ENCODE measurements at regions of chr19 and their contacts with region 1.

Region 1: DNA sequence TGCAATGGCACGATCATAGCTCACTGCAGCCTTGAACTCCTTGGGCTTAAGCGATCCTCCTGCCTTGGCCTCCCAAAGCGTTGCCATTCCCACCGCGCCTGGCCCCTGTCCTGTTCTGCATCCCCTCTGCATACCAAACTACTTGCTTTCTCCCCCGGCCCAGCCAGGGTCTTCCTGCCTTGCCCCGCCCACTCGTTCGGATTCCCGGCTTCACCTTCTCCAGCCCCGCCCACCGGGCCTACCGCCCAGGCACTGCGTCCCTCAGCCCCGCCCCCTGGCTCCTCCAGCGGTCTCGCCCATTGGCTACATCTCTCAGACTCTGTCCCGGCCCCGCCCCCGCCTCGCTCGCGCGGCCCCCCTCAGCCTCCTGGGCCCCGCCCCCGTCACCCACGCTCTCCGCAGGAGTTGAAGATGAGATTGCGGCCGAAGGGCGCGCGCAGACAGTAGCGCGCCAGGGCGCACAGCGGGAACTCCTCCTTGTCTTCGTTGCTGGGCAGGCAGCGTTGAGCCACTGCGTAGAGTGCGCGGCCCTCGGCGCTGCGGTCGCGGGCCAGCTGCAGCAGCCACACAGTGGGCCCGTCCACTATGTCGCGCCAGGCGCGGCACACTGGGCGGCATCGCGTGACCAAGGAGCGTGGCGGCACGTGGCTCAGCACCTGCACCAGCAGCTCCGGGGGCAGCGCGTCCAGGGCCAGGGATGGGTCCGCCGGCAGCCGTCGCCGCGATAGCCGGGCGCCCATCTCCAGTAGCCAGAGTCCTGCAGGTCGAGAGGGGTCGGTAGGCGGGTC is 19.0 kb downstream of the MRPS12 start:
- DNase-seq: peak; percentile 60 to 90 (median 77)
- ATAC-seq: peak; percentile 94
- H3K4me3 ChIP-seq: peak overlapping the region; percentile 20
- H3K4me3 Mint-ChIP-seq: peak overlapping the region; percentile 72
- H3K27ac ChIP-seq: no peak overlapping the region
- H3K27ac Mint-ChIP-seq: no peak overlapping the region
- H3K4me1 ChIP-seq: peaks cover 18% of the 10 kb centered on the region
- H3K4me1 Mint-ChIP-seq: peaks cover 13% of the 10 kb centered on the region
- H3K27me3 ChIP-seq: peaks cover 6 to 8% of the 10 kb centered on the region in 2 experiments
- H3K27me3 Mint-ChIP-seq: peaks cover 17% of the 10 kb centered on the region
- CTCF ChIP-seq: no peak

Region 2: GRCh38 chr19:39014037-39014436 is 64.3 kb after region 1 on chr19:
- CTCF ChIA-PET with region 1: no interaction called
- POLR2A ChIA-PET with region 1: no interaction called
- intact Hi-C with region 1: no loop called
- DNase-seq: no peak
- ATAC-seq: no peak
- H3K4me3 ChIP-seq: no peak overlapping the region
- H3K4me3 Mint-ChIP-seq: no peak overlapping the region
- H3K27ac ChIP-seq: no peak overlapping the region
- H3K27ac Mint-ChIP-seq: no peak overlapping the region
- H3K4me1 ChIP-seq: no peaks in the 10 kb centered on the region
- H3K4me1 Mint-ChIP-seq: no peaks in the 10 kb centered on the region
- H3K27me3 ChIP-seq: no peaks in the 10 kb centered on the region
- H3K27me3 Mint-ChIP-seq: peaks cover 21% of the 10 kb centered on the region
- CTCF ChIP-seq: no peak

Region 3: DNA sequence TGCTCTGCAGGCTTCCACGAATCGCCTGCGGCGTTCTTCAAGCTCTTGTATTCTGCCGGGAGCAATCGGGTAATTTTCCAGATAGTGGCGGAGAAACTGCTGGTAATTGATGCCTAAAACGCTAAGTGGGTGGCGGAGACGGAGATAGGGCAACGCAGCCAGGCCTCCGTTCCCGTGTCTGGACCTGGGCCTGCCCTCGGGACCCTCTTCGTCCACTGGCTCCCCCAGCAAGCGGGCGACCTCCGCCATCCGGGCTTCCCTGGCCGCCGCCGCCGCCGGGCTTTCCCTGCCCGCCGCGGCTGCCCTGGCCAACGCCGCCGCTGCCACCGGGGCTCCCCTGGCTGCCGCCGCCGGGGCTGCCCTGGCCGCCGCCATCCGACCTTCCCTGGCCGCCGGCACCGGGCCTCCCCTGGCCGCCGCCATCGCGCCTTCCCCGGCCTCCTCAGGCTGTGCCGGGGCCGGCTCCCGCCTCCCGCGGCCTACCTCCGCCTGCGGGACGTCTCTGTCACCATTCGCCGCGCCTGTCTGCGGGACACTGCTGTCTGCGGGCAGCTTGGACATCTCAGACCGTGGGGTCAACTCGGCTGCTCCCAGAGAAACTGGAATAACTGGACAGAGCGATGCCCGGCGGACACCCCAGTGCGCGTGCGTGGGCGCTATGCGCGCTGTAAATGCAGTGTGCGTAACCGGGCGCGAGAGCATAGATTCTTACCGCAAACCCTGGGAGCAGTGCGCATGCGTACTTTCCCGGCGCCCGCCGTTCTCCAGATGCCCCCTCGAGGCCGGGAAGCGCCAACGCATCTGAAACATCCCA is 590.0 kb after region 1 on chr19 and contains the start of gene EID2:
- CTCF ChIA-PET with region 1: no interaction called
- POLR2A ChIA-PET with region 1: no interaction called
- intact Hi-C with region 1: loop called in 1 of 2 experiments (anchors 10 kb)
- DNase-seq: peak; percentile 88 to 98 (median 93)
- ATAC-seq: peak; percentile 91
- H3K4me3 ChIP-seq: peak within 1 kb of the TSS; percentile 73
- H3K4me3 Mint-ChIP-seq: peak within 1 kb of the TSS; percentile 98
- H3K27ac ChIP-seq: peak within 1 kb of the TSS; percentile 93
- H3K27ac Mint-ChIP-seq: peak within 1 kb of the TSS; percentile 96
- H3K4me1 ChIP-seq: peaks cover 32% of the 10 kb centered on the region
- H3K4me1 Mint-ChIP-seq: peaks cover 71% of the 10 kb centered on the region
- H3K27me3 ChIP-seq: no peaks in the 10 kb centered on the region
- H3K27me3 Mint-ChIP-seq: no peaks in the 10 kb centered on the region
- CTCF ChIP-seq: no peak
- total RNA-seq, gene EID2: 17.2 to 18.1 TPM

Measured in CD4-positive, alpha-beta T cell (primary cell).